Sigmoid colon (tissue), 7 donors: ENCODE measurements at regions of chr15 and their contacts with region 1.

Region 1: DNA sequence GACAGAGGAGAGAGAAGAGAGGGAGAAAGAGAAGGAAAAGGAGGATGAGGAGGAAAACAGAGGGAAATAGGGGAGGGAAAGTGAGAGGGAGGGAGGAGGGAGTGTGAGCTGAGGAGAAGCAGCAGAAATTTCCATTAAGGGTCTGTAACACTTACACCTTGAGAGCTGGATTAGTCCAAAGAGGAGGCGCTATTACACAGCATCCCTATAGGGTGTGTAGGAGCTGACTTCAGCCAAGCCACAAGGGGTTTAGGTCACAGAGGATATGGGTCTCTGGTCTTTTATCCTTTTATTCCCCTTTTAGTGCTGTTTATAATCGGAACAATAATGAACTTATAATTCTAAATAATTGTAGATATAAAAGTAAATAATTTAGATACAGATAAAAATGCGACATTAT is 230.4 kb downstream of the GABRG3 start:
- DNase-seq: no peak
- H3K4me3 ChIP-seq: no peak overlapping the region
- H3K27ac ChIP-seq: no peak overlapping the region
- H3K4me1 ChIP-seq: no peaks in the 10 kb centered on the region
- H3K27me3 ChIP-seq: no peaks in the 10 kb centered on the region
- CTCF ChIP-seq: no peak
- EP300 ChIP-seq: no peak
- POLR2A ChIP-seq: no peak

Region 2: DNA sequence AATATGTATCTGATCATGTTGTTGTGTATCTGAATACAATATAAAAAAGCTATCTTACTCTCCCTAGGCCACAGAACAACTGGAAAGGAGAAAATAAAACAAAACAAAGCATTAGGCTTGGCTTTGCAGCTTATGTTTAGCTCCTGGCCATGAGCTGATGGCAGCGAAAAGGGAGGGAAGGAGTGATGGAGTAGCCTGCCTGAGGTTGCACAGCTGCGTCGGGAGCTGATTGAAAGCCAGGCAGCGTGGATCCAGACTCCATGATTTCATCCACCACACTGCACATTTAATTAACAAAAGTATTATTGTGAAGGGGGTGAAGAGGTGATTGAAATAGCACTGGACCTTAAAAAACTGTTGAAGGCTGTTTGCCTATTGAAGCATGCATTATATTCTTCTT is 18.2 kb before region 1 on chr15:
- intact Hi-C with region 1: no loop called
- DNase-seq: no peak
- H3K4me3 ChIP-seq: no peak overlapping the region
- H3K27ac ChIP-seq: no peak overlapping the region
- H3K4me1 ChIP-seq: no peaks in the 10 kb centered on the region
- H3K27me3 ChIP-seq: no peaks in the 10 kb centered on the region
- CTCF ChIP-seq: no peak
- EP300 ChIP-seq: no peak
- POLR2A ChIP-seq: no peak

Region 3: DNA sequence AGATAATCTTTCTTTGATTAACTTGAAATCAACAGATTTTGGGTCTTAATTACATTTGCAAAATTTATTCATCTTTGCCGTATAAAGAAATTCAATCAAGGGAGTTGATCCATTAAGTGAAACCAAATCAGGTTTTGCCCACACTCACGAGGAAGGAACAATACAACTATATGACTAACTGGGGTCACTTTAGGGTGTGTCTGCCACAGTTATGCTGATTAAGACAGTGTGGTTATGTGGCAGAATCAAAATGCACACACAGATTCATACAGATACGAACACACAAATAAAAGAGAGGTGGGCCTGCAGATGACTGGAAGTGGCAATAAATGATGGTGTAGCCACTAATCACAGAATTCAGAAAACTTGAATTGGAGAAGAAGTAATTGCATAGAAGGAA is 313.1 kb after region 1 on chr15:
- intact Hi-C with region 1: loop called (anchors 10 kb)
- DNase-seq: no peak
- H3K4me3 ChIP-seq: no peak overlapping the region
- H3K27ac ChIP-seq: no peak overlapping the region
- H3K4me1 ChIP-seq: no peaks in the 10 kb centered on the region
- H3K27me3 ChIP-seq: no peaks in the 10 kb centered on the region
- CTCF ChIP-seq: no peak
- EP300 ChIP-seq: no peak
- POLR2A ChIP-seq: no peak